PC-9 (cell line): ENCODE measurements at regions of chr6 and their contacts with region 1.

Region 1: DNA sequence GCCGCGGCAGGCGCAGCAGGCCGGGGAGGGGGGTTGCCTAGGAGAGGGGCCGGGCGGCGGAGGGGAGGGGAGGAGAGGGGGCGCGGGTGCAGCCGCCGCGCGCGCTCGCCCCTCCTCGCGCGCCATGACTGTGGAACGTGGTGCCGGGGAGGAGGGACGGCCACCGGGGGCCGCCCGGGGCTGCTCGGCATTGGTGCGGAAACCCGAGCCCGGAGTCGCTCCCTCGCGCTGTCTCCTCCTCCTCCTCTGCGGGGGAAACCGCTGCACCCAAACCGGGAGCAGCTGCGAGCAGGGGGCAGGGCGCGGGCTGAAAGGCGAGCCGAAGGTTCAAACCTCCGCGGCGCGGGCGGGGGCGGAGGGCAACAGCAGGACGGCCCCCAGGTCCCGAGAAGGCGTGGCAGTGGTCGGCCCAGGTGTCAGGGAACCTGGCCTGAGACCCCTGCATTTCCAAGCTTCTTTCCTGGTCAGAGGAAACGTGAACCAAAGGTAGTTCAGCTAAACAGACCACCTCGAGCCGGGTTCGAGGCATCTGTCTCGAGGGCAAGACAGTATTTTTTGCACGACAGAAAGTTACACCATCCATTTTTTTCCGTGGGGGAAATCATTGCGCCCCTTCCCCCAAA is 1.4 kb upstream of the TRERF1 start:
- DNase-seq: peak; percentile 75 to 88
- H3K4me3 ChIP-seq: peak overlapping the region; percentile 77
- H3K27ac ChIP-seq: peak overlapping the region; percentile 69
- H3K4me1 ChIP-seq: peaks cover 19% of the 10 kb centered on the region
- H3K27me3 ChIP-seq: no peaks in the 10 kb centered on the region
- CTCF ChIP-seq: no peak

Region 2: DNA sequence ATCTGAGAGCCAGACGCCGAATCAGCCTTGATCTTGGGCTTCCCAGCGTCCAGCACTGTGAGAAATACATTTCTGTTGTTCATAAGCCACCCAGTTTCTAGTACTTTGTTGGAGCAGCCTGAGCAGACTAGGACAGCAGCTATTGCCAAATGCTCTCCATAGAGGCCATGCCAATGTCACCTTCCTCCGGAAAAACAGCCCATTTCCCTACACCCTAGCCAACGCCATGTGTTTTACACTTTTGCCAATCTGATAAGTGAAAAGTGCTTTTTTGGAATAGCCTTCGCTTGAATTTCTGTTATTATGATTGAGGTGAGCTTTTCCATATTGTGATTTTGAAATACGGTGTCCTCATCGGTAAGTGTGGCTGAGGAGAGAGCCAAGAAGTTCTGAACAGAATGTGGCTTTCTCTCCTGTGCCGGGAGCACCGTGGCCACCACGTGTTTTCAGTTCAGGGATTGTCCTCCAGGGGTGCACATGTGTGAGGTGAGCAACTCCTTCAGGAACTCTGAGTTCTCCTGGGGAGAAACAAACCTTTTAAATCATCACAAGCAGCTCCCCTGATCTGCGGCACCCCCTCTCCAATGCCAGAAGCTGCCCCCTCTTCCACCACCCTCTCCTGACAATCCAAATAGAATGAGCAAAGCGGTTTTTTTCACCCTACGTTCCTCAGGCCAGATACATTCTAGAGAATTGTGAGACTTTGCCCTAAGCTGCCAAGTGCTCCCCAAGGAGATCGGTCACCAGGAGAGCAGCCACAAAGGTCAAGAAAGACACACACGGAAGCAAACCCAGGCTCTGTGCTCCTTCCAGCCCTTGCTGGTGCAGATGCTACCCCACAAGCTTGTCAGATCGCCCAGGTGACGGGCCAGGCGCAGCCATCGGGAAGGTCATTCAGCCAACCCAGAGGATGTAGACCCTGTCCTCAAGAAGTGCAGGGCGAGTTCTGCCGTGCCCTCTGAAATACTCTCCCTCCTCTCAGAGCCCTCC is 366.8 kb before region 1 on chr6:
- CTCF ChIA-PET with region 1: no interaction called
- POLR2A ChIA-PET with region 1: interaction called, 17 read pairs
- intact Hi-C with region 1: no loop called
- DNase-seq: no peak
- H3K4me3 ChIP-seq: no peak overlapping the region
- H3K27ac ChIP-seq: peak overlapping the region; percentile 78
- H3K4me1 ChIP-seq: peaks cover 31% of the 10 kb centered on the region
- H3K27me3 ChIP-seq: no peaks in the 10 kb centered on the region
- CTCF ChIP-seq: no peak; the same call in 1 of the 2 replicates

Region 3: DNA sequence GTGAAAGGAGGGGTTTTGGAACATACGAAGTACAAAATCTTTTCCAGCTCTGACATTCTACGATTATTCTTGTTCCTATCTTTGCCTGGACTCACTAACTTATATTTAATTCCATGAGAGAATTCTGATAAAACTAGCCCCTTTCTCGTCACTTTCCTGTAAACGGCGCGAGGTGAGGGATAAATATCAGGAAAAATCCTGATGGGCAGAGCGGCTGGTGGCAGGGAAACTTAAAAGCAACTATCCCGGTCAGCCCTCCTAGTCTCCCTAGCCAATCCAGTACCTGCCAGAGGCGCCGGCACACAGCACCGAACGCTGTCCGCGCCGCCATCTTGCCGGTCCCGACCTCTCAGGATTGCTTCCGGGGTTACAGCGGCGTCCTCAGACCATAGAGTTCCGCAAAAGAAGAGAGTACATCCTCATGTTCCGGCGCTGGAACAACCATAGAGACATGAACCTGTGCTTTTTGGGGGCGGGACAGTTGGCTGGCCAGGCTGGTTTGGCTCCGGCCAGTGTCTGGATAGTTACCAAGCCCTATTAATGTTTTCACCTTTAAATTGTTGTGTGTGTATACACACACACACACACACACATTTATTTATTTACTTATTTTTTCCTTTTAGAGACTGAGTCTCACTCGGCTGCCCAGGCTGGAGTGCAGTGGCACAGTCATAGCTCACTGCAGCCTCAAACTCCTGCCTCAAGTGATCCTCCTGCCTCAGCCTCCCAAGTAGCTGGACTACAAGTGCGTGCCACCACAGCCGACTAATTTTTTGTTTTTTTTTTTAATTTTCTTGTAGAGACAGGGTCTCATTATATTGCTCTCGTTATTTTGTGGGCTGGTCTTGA is 235.4 kb before region 1 on chr6 and contains the start of gene MRPS10:
- CTCF ChIA-PET with region 1: no interaction called
- POLR2A ChIA-PET with region 1: interaction called, 9 read pairs
- intact Hi-C with region 1: loop called (anchors 2 kb)
- DNase-seq: peak; percentile 89 to 91
- H3K4me3 ChIP-seq: peak within 1 kb of the TSS; percentile 96
- H3K27ac ChIP-seq: peak within 1 kb of the TSS; percentile 76
- H3K4me1 ChIP-seq: peaks cover 59% of the 10 kb centered on the region
- H3K27me3 ChIP-seq: no peaks in the 10 kb centered on the region
- CTCF ChIP-seq: no peak
- total RNA-seq, gene MRPS10: 38.7 and 56.5 TPM in 2 replicates

Region 4: DNA sequence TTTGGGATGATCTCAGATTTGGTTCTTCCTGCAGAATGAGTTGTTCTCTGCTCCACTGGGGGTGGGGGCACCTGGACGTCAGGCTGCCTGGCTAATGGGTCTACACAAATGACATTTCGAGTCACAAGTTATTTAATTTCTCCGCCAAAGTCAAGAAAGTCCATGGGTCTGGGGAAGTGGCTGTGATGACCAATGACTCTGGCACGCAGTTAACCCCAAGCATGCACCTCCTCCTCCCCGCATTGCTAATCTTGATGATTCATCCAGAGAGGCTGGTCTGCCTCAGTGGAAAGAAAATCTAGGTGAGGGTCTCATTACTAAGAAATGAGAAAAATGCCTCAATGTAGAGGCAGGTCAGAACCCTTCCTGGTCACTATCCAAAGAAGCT is 137.2 kb before region 1 on chr6:
- CTCF ChIA-PET with region 1: no interaction called
- POLR2A ChIA-PET with region 1: interaction called, 13 read pairs
- intact Hi-C with region 1: loop called (anchors 2 kb)
- DNase-seq: peak; percentile 79 to 95
- H3K4me3 ChIP-seq: no peak overlapping the region
- H3K27ac ChIP-seq: peak overlapping the region; percentile 93
- H3K4me1 ChIP-seq: peaks cover 58% of the 10 kb centered on the region
- H3K27me3 ChIP-seq: no peaks in the 10 kb centered on the region
- CTCF ChIP-seq: no peak

Region 5: DNA sequence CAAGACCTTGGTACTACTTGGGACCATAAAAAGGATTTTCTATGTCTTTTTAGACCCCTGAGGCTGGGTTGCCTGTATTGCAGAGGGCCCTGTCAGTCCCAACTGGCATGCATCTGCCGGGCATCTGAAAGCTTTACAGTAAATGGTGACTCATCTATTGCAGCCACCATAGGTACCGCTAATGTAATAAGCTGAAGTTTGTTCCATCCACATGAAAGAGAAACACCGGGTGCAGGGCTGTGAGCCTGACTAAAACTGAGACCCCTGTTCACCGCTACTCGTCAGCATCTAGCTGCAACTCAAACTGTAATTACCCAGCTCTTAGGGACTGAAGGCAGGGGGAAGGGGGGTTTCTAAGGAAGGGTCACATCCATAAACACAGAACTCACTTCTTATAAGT is 51.0 kb before region 1 on chr6:
- CTCF ChIA-PET with region 1: no interaction called
- POLR2A ChIA-PET with region 1: interaction called, 6 read pairs
- intact Hi-C with region 1: loop called (anchors 1 kb)
- DNase-seq: peak; percentile 6 to 45
- H3K4me3 ChIP-seq: no peak overlapping the region
- H3K27ac ChIP-seq: no peak overlapping the region
- H3K4me1 ChIP-seq: peaks cover 52% of the 10 kb centered on the region
- H3K27me3 ChIP-seq: no peaks in the 10 kb centered on the region
- CTCF ChIP-seq: no peak

Region 6: DNA sequence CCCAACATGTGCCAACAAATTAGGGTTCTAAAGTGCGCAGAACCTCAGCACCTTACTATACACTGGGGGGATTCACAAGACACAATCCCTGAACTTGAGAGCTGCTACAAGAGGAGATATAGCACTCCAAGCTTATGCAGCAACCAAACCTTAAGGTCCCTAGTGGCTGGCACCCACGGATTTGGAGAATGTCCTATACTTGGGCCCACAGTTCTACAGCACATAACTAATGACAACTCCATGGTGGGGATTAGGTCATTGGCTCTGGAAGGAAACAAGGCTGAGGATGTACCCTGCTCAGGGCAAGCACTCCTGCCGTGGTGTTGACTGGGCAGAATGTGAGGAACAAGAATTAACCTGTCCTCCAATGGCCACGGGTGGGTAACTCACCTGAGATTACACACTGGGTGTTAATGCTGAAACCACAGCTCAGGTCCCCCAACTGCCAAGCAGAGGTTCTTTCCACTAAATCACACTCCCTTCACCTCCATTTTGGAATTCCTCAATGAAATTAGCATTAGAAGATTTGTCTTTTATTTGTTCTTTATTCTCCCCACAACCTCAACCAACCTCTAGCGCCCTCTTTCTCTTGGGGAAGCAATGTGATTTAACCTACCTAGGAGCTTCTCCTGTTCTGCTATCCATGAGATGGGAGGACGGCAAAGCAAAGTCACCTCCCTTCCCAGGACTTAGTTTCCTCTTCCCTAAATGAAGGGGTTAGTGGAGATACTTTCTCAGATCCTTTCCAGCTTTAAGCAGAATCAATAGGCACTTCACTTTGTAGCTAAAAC is 33.5 kb before region 1 on chr6:
- CTCF ChIA-PET with region 1: no interaction called
- POLR2A ChIA-PET with region 1: interaction called, 10 read pairs
- intact Hi-C with region 1: no loop called
- DNase-seq: no peak
- H3K4me3 ChIP-seq: no peak overlapping the region
- H3K27ac ChIP-seq: no peak overlapping the region
- H3K4me1 ChIP-seq: no peaks in the 10 kb centered on the region
- H3K27me3 ChIP-seq: no peaks in the 10 kb centered on the region
- CTCF ChIP-seq: no peak

Region 7: DNA sequence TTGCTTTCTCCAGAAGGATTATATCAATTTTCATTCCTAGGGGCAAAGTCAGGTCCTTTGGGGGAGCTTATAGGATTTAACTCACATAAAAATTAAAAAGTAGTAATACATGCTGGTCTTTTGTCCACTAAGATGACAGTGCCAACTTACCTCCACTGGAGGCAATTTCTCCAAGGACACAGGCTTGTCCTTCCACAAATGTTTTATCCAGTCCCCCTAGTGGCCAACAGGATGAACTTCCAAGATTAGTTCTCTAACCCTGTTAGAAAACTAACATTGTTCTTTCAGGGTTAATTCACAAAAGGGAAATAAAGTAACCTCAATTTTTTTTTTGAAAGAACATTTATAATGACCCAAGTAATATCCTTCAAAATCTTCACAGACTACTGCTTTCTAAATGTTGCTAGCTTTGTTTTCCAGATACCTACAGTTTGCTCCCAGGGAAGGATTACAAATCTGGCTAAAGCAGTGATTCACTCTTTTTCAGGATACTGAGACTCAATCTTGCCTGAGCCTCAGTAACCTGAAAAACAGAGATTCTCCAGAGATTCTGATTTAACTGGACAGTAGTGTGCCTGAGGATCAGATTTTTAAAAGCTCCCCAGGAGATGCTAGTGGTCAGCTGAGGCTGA is 79.0 kb after region 1 on chr6:
- CTCF ChIA-PET with region 1: interaction called, 3 read pairs
- POLR2A ChIA-PET with region 1: interaction called, 8 read pairs
- intact Hi-C with region 1: loop called (anchors 5 kb)
- DNase-seq: peak; percentile 12 to 49
- H3K4me3 ChIP-seq: no peak overlapping the region
- H3K27ac ChIP-seq: no peak overlapping the region
- H3K4me1 ChIP-seq: peaks cover 14% of the 10 kb centered on the region
- H3K27me3 ChIP-seq: no peaks in the 10 kb centered on the region
- CTCF ChIP-seq: peak; percentile 94

Region 8: GRCh38 chr6:42911171-42912021 is 458.3 kb after region 1 on chr6:
- CTCF ChIA-PET with region 1: no interaction called
- POLR2A ChIA-PET with region 1: no interaction called
- intact Hi-C with region 1: no loop called
- DNase-seq: no peak
- H3K4me3 ChIP-seq: no peak overlapping the region
- H3K27ac ChIP-seq: no peak overlapping the region
- H3K4me1 ChIP-seq: no peaks in the 10 kb centered on the region
- H3K27me3 ChIP-seq: no peaks in the 10 kb centered on the region
- CTCF ChIP-seq: no peak

Region 9: DNA sequence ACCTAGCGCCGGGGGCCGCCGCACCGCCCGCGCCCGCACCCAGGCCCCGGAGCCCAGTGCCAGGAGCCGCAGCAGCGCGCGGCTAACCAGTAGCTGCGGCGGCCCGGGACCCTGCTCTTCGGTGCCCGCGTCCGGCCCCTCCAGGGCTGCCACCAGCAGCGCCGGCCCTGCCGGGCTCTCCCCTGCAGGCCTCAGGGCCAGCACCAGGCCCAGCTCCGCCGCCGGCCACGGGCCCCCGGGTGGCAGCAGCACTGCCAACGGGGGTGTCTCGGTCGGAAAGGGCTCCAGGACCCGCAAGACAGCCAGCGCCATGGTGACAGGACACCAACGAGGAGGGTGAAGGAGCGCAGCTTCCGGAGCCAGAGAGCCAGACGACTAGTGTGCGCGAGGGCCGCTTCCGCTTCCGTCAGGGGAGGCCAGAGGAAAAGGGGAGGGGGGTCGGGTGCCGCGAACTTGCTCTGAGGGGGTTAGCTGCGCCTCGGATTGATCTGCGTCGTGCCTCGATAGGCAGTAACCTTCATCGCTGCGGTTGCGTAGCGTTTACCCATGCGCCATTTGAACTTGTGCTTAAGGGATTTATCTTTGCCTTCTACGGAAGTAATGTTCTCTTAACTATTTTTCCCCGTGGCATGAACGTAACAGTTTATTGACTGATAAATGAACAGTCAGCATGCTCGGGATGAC is 525.8 kb after region 1 on chr6 and contains the start of gene PEX6:
- CTCF ChIA-PET with region 1: no interaction called
- POLR2A ChIA-PET with region 1: no interaction called
- intact Hi-C with region 1: no loop called
- DNase-seq: peak; percentile 72 to 81
- H3K4me3 ChIP-seq: peak within 1 kb of the TSS; percentile 87
- H3K27ac ChIP-seq: peak within 1 kb of the TSS; percentile 30
- H3K4me1 ChIP-seq: 0 out of 2 replicates have a peak, but pooled peaks cover 26% of the 10 kb centered on the region
- H3K27me3 ChIP-seq: no peaks in the 10 kb centered on the region
- CTCF ChIP-seq: no peak
- total RNA-seq, gene PEX6: 25.9 and 31.3 TPM in 2 replicates